Activated T-helper 1 cell treated with anti-CD3 and anti-CD28 coated beads, Interleukin-12 subunit alpha, Interleukin-12 subunit beta, Interleukin-2, Interleukin-4 antibody, amounts not matched to agents 30 ng/mL and 10 ng/mL and 1 ng/mL, durations not matched to agents 14 hours and 24 hours and 36 hours (primary cell): ENCODE measurements at regions of chr1 and their contacts with region 1.

Region 1: GRCh38 chr1:94602316-94602715 is 60.8 kb upstream of the F3 start:
- DNase-seq: peak; percentile 48
- H3K4me3 Mint-ChIP-seq: peak overlapping the region; percentile 75
- H3K27ac Mint-ChIP-seq: peak overlapping the region; percentile 13
- H3K4me1 Mint-ChIP-seq: peaks cover 27% of the 10 kb centered on the region
- H3K27me3 Mint-ChIP-seq: peaks cover 26% of the 10 kb centered on the region

Region 2: GRCh38 chr1:94362466-94363058 is 239.8 kb before region 1 on chr1:
- intact Hi-C with region 1: no loop called
- DNase-seq: no peak
- H3K4me3 Mint-ChIP-seq: no peak overlapping the region
- H3K27ac Mint-ChIP-seq: no peak overlapping the region
- H3K4me1 Mint-ChIP-seq: no peaks in the 10 kb centered on the region
- H3K27me3 Mint-ChIP-seq: peaks cover 6% of the 10 kb centered on the region

Region 3: DNA sequence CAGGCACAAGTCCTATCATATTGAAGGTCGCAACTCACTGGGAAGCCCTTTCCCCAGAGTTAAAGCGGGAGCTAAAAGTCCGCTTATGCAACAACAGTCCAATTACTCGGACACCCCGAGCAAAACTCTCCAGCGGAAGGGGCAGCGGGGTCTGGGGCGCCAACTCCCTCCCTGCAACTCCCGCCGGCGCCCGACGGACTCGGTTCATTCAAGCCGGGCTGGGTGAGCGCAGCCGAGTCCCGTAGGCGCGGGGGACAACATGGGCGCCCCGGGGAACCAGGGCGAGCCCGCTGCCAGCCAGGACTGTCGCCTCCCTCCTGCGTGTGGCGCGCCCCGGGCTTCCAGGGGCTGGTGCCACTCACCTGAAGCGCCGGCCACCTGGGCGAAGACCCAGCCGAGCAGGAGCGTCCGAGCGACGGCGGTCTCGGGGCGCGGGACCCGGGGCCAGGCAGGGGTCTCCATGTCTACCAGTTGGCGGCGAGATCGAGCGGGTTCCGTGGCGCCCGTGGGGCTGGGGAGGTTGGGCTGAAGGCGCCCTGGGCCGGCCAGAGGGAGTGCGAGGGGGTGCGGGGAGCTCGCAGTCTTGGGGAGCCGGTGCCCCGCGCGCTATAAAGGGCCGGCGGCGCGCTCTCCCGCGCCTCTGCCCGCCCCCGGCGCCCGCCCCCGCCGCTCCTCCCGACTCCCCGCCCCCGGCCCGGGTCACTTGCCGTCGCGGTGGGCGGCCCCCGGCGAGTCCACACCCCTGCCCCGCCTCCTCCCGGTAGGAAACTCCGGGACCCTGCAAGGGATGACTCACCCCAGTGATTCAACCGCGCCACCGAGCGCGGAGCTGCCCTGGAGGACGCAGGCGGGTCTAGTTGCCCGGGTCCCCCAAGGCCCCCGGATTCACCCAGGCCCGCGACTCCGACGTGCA is 60.9 kb before region 1 on chr1 and contains the start of gene F3:
- intact Hi-C with region 1: loop called (anchors 2 kb)
- DNase-seq: peak; percentile 68
- H3K4me3 Mint-ChIP-seq: peak within 1 kb of the TSS; percentile 86
- H3K27ac Mint-ChIP-seq: peak within 1 kb of the TSS; percentile 33
- H3K4me1 Mint-ChIP-seq: peaks cover 20% of the 10 kb centered on the region
- H3K27me3 Mint-ChIP-seq: peaks cover 79% of the 10 kb centered on the region
- total RNA-seq, gene F3: 0.16 and 0.32 TPM in 2 replicates

Region 4: DNA sequence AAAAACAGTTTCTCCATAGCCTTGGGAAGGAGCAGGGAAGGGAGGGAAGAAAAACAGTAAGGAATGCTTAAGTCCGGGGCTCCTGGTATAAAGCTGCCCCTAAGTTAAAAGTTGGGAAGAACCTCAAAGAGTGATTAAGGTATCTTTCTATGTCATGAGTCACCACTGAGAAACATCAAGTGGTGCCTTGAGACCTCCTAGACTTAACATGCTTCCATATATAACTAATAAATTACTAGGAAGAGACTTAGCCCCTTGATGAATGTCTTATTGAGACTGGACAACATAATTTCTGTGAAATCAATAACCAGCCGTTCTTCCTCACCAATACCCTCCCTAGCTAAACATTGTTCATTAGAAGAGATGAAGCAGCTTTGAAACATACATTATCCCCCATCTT is 96.0 kb after region 1 on chr1:
- intact Hi-C with region 1: no loop called
- DNase-seq: no peak
- H3K4me3 Mint-ChIP-seq: no peak overlapping the region
- H3K27ac Mint-ChIP-seq: no peak overlapping the region
- H3K4me1 Mint-ChIP-seq: no peaks in the 10 kb centered on the region
- H3K27me3 Mint-ChIP-seq: peaks cover 9% of the 10 kb centered on the region

Region 5: GRCh38 chr1:94734963-94735899 is 132.9 kb after region 1 on chr1:
- intact Hi-C with region 1: loop called (anchors 5 kb)
- DNase-seq: no peak
- H3K4me3 Mint-ChIP-seq: no peak overlapping the region
- H3K27ac Mint-ChIP-seq: no peak overlapping the region
- H3K4me1 Mint-ChIP-seq: peaks cover 19% of the 10 kb centered on the region
- H3K27me3 Mint-ChIP-seq: peaks cover 7% of the 10 kb centered on the region